ENCODE measurements at regions of chr17 and their contacts with region 1.

Region 1: GRCh38 chr17:42517516-42517915 is 18.5 kb upstream of the NAGLU start:
- DNase-seq: peak; percentile 85 to 94 (median 91)
- ATAC-seq: peak; percentile 80
- H3K4me3 ChIP-seq: no peak overlapping the region
- H3K27ac ChIP-seq: peak overlapping the region; percentile 86
- H3K4me1 ChIP-seq: peaks cover 51 to 63% of the 10 kb centered on the region in 2 experiments
- H3K27me3 ChIP-seq: no peaks in the 10 kb centered on the region
- CTCF ChIP-seq: peak; percentile 98
- EP300 ChIP-seq: no peak
- POLR2A ChIP-seq: no peak
- RAD21 ChIP-seq: peak; percentile 73 to 82

Region 2: GRCh38 chr17:42347198-42347597 is 170.3 kb before region 1 on chr17:
- CTCF ChIA-PET with region 1: no interaction called
- POLR2A ChIA-PET with region 1: no interaction called
- in situ Hi-C with region 1: no loop called
- intact Hi-C with region 1: no loop called
- DNase-seq: no peak
- ATAC-seq: no peak
- H3K4me3 ChIP-seq: no peak overlapping the region
- H3K27ac ChIP-seq: no peak overlapping the region
- H3K4me1 ChIP-seq: no peaks in the 10 kb centered on the region
- H3K27me3 ChIP-seq: no peaks in the 10 kb centered on the region
- CTCF ChIP-seq: no peak
- EP300 ChIP-seq: no peak
- POLR2A ChIP-seq: no peak
- RAD21 ChIP-seq: no peak

Region 3: GRCh38 chr17:42428141-42428944 is 89.2 kb before region 1 on chr17:
- CTCF ChIA-PET with region 1: no interaction called
- POLR2A ChIA-PET with region 1: interaction called, 7 read pairs
- in situ Hi-C with region 1: no loop called
- intact Hi-C with region 1: loop called (anchors 5 kb)
- DNase-seq: peak in 2 of 4 experiments; percentile 43 to 67
- ATAC-seq: peak; percentile 86
- H3K4me3 ChIP-seq: no peak overlapping the region
- H3K27ac ChIP-seq: no peak overlapping the region
- H3K4me1 ChIP-seq: peaks cover 7 to 10% of the 10 kb centered on the region in 2 experiments; a peak in 4 of 5 replicates
- H3K27me3 ChIP-seq: no peaks in the 10 kb centered on the region
- CTCF ChIP-seq: peak; percentile 71 to 76 (median 73)
- EP300 ChIP-seq: no peak
- POLR2A ChIP-seq: no peak
- RAD21 ChIP-seq: peak; percentile 49 to 69

Region 4: GRCh38 chr17:42472709-42473521 is 44.6 kb before region 1 on chr17:
- CTCF ChIA-PET with region 1: no interaction called
- POLR2A ChIA-PET with region 1: interaction called, 4 read pairs
- in situ Hi-C with region 1: no loop called
- intact Hi-C with region 1: loop called (anchors 5 kb)
- DNase-seq: peak in 1 of 4 experiments; percentile 1
- ATAC-seq: no peak
- H3K4me3 ChIP-seq: no peak overlapping the region
- H3K27ac ChIP-seq: no peak overlapping the region
- H3K4me1 ChIP-seq: no peaks in the 10 kb centered on the region
- H3K27me3 ChIP-seq: no peaks in the 10 kb centered on the region
- CTCF ChIP-seq: no peak
- EP300 ChIP-seq: no peak
- POLR2A ChIP-seq: no peak
- RAD21 ChIP-seq: no peak

Region 5: GRCh38 chr17:42536048-42536371 is 18.5 kb after region 1 on chr17 and contains the start of gene NAGLU:
- CTCF ChIA-PET with region 1: interaction called, 6 read pairs
- POLR2A ChIA-PET with region 1: interaction called, 15 read pairs
- in situ Hi-C with region 1: no loop called
- intact Hi-C with region 1: no loop called
- DNase-seq: peak; percentile 97 to 100 (median 99)
- ATAC-seq: peak; percentile 89
- H3K4me3 ChIP-seq: peak within 1 kb of the TSS; percentile 64
- H3K27ac ChIP-seq: peak within 1 kb of the TSS; percentile 80
- H3K4me1 ChIP-seq: peaks cover 23 to 59% of the 10 kb centered on the region in 2 experiments
- H3K27me3 ChIP-seq: no peaks in the 10 kb centered on the region
- CTCF ChIP-seq: no peak
- EP300 ChIP-seq: peak; percentile 42; the same call in 1 of the 2 replicates
- POLR2A ChIP-seq: peak; percentile 78
- RAD21 ChIP-seq: no peak
- polyA plus RNA-seq, gene NAGLU: 0.04 to 0.21 TPM

Region 6: GRCh38 chr17:42586514-42587230 is 69.2 kb after region 1 on chr17:
- CTCF ChIA-PET with region 1: no interaction called
- POLR2A ChIA-PET with region 1: no interaction called
- in situ Hi-C with region 1: no loop called
- intact Hi-C with region 1: no loop called
- DNase-seq: no peak
- ATAC-seq: no peak
- H3K4me3 ChIP-seq: no peak overlapping the region
- H3K27ac ChIP-seq: no peak overlapping the region
- H3K4me1 ChIP-seq: no peaks in the 10 kb centered on the region
- H3K27me3 ChIP-seq: no peaks in the 10 kb centered on the region
- CTCF ChIP-seq: no peak
- EP300 ChIP-seq: no peak
- POLR2A ChIP-seq: no peak
- RAD21 ChIP-seq: no peak

Measured in K562 (cell line).